ENCODE measurements at regions of chr20 and their contacts with region 1.

Region 1: DNA sequence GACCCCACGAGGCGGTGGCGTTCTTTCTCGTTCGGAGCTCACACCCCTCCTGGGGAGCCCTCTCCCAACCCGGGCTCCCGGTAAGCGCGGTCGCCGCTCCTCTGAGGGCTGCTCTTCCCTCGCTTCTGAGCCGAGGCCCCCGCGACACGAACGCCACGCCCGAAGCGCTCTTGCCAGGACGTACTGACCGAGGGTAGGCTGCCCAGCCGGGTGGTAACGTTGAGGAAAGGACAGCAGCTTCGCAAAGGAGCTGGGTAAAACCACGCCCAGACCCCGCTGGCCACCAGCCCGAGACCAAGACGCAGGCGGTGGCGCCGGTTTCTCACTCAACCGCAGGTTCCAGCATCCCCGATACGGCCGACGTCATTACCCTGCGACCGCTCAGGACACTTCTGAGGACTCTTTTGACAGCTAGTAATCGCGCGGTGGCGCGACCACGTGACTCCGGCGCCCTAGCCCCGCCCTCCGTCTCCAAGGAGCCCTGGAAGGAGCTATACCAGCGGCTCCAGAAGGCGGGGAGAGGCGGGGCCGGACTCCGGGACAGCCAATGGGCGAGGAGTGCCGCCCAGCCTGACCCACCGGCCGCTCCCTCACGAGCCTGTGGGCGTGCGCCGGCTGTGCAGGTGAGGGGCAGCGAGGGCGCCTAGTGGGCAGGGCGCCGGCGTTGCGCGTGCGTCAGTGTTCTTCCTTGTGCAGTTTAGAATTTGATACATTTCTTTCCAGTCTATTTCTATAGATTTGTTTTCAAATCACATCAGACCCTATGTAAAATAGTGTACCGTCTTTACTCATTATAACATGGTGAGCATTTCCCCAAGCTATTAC is 4.0 kb upstream of the GZF1 start:
- DNase-seq: peak; percentile 97 to 99 (median 98)
- ATAC-seq: peak; percentile 81
- H3K4me3 ChIP-seq: peak overlapping the region; percentile 85
- H3K4me3 Mint-ChIP-seq: peak overlapping the region; percentile 91 to 95 (median 93)
- H3K27ac ChIP-seq: peak overlapping the region; percentile 92
- H3K27ac Mint-ChIP-seq: peak overlapping the region; percentile 94 to 98 (median 97)
- H3K4me1 ChIP-seq: peaks cover 14 to 22% of the 10 kb centered on the region in 2 donors
- H3K4me1 Mint-ChIP-seq: peaks cover 17 to 38% (median 34%) of the 10 kb centered on the region in 7 donors
- H3K27me3 ChIP-seq: no peaks in the 10 kb centered on the region
- H3K27me3 Mint-ChIP-seq: peaks cover 0 to 4% (median 0%) of the 10 kb centered on the region in 5 donors

Region 2: GRCh38 chr20:23305098-23305497 is 52.9 kb before region 1 on chr20:
- CTCF ChIA-PET with region 1: no interaction called
- POLR2A ChIA-PET with region 1: no interaction called
- intact Hi-C with region 1: no loop called
- DNase-seq: no peak
- ATAC-seq: no peak
- H3K4me3 ChIP-seq: no peak overlapping the region
- H3K4me3 Mint-ChIP-seq: no peak overlapping the region
- H3K27ac ChIP-seq: no peak overlapping the region
- H3K27ac Mint-ChIP-seq: no peak overlapping the region
- H3K4me1 ChIP-seq: no peaks in the 10 kb centered on the region
- H3K4me1 Mint-ChIP-seq: peaks cover 0 to 1% (median 0%) of the 10 kb centered on the region in 7 donors
- H3K27me3 ChIP-seq: no peaks in the 10 kb centered on the region
- H3K27me3 Mint-ChIP-seq: peaks cover 0 to 6% (median 0%) of the 10 kb centered on the region in 5 donors

Region 3: GRCh38 chr20:23407781-23408464 is 49.9 kb after region 1 on chr20:
- CTCF ChIA-PET with region 1: no interaction called
- POLR2A ChIA-PET with region 1: no interaction called
- intact Hi-C with region 1: loop called in 1 of 2 experiments (anchors 1 kb)
- DNase-seq: peak in 2 of 9 donors; percentile 12 to 34
- ATAC-seq: peak; percentile 84
- H3K4me3 ChIP-seq: no peak overlapping the region
- H3K4me3 Mint-ChIP-seq: peak overlapping the region in 1 of 10 donors; percentile 65
- H3K27ac ChIP-seq: no peak overlapping the region
- H3K27ac Mint-ChIP-seq: peak overlapping the region in 3 of 9 donors; percentile 38 to 91 (median 41)
- H3K4me1 ChIP-seq: peaks cover 0 to 9% of the 10 kb centered on the region in 2 donors
- H3K4me1 Mint-ChIP-seq: peaks cover 23 to 60% (median 49%) of the 10 kb centered on the region in 7 donors
- H3K27me3 ChIP-seq: no peaks in the 10 kb centered on the region
- H3K27me3 Mint-ChIP-seq: no peaks in the 10 kb centered on the region

Measured in naive thymus-derived CD4-positive, alpha-beta T cell (primary cell).